Naive thymus-derived CD4-positive, alpha-beta T cell (primary cell): ENCODE measurements at regions of chr2 and their contacts with region 1.

Region 1: GRCh38 chr2:28392297-28393113 is at the start of gene FOSL2:
- DNase-seq: peak; percentile 87 to 98 (median 92)
- ATAC-seq: peak; percentile 85
- H3K4me3 ChIP-seq: peak within 1 kb of the TSS; percentile 92
- H3K4me3 Mint-ChIP-seq: peak within 1 kb of the TSS in 7 of 10 donors; percentile 86 to 99 (median 91)
- H3K27ac ChIP-seq: peak within 1 kb of the TSS; percentile 88
- H3K27ac Mint-ChIP-seq: peak within 1 kb of the TSS in 8 of 9 donors; percentile 92 to 98 (median 98)
- H3K4me1 ChIP-seq: peaks cover 16 to 18% of the 10 kb centered on the region in 2 donors
- H3K4me1 Mint-ChIP-seq: peaks cover 6 to 45% (median 21%) of the 10 kb centered on the region in 7 donors
- H3K27me3 ChIP-seq: no peaks in the 10 kb centered on the region
- H3K27me3 Mint-ChIP-seq: no peaks in the 10 kb centered on the region
- total RNA-seq, gene FOSL2: 0.81 to 251 (median 33.9) TPM

Region 2: GRCh38 chr2:27050281-27050995 is 1342.1 kb before region 1 on chr2:
- CTCF ChIA-PET with region 1: no interaction called
- POLR2A ChIA-PET with region 1: no interaction called
- intact Hi-C with region 1: loop called in 1 of 2 experiments (anchors 2 kb)
- DNase-seq: peak; percentile 77 to 95 (median 94)
- ATAC-seq: peak; percentile 76
- H3K4me3 ChIP-seq: peak overlapping the region; percentile 99
- H3K4me3 Mint-ChIP-seq: peak overlapping the region; percentile 86 to 100 (median 99)
- H3K27ac ChIP-seq: peak overlapping the region; percentile 84
- H3K27ac Mint-ChIP-seq: peak overlapping the region; percentile 96 to 100 (median 100)
- H3K4me1 ChIP-seq: peaks cover 8 to 15% of the 10 kb centered on the region in 2 donors
- H3K4me1 Mint-ChIP-seq: peaks cover 10 to 34% (median 19%) of the 10 kb centered on the region in 7 donors
- H3K27me3 ChIP-seq: no peaks in the 10 kb centered on the region
- H3K27me3 Mint-ChIP-seq: peaks cover 0 to 8% (median 4%) of the 10 kb centered on the region in 5 donors

Region 3: DNA sequence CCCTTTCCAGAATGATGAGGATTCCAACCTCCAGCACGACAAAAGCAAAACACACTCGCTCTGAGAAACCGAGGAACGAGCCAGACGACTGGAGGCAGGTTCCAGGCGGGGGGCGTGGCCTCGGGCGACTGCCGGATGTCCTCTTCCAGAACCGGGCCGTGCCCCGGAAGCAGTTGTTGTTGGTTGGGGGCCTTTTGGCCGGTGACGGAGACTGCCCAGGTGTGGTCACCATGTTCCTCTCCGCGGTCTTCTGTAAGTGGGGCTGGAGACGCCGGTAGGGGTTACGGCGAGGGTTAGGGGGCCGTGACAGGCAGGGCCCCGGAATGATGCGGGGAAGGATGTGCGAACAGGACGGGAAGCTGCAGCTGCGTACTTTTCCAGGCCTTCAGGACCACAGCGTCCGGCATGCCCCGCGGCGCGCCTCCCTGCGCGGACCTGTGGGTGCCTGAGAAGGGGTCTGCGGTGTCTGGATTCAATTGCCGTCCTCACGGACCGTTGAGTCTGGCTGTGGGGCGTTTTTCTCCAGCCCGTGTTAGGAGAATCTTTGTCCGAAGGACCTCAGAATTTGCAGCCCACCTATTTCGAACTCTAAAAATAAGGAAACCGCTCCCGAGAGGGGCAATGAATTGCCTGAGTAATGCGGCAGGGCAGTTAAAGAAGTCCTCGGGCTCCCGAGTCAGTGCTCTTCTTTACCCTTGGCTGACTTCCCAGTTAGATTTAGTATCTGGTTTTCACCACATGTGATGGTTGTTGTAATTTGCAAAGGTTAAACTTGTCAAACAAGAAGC is 620.8 kb before region 1 on chr2 and contains the start of gene MRPL33:
- CTCF ChIA-PET with region 1: no interaction called
- POLR2A ChIA-PET with region 1: no interaction called
- intact Hi-C with region 1: loop called (anchors 1 to 5 kb)
- DNase-seq: peak; percentile 85 to 92 (median 89)
- ATAC-seq: peak; percentile 97
- H3K4me3 ChIP-seq: peak within 1 kb of the TSS; percentile 92
- H3K4me3 Mint-ChIP-seq: peak within 1 kb of the TSS; percentile 96 to 100 (median 99)
- H3K27ac ChIP-seq: peak within 1 kb of the TSS; percentile 92
- H3K27ac Mint-ChIP-seq: peak within 1 kb of the TSS; percentile 97 to 100 (median 100)
- H3K4me1 ChIP-seq: peaks cover 10 to 20% of the 10 kb centered on the region in 2 donors
- H3K4me1 Mint-ChIP-seq: peaks cover 32 to 59% (median 52%) of the 10 kb centered on the region in 7 donors
- H3K27me3 ChIP-seq: no peaks in the 10 kb centered on the region
- H3K27me3 Mint-ChIP-seq: peaks cover 0 to 8% (median 0%) of the 10 kb centered on the region in 5 donors
- total RNA-seq, gene MRPL33: 27.3 to 39.4 (median 35.1) TPM

Region 4: DNA sequence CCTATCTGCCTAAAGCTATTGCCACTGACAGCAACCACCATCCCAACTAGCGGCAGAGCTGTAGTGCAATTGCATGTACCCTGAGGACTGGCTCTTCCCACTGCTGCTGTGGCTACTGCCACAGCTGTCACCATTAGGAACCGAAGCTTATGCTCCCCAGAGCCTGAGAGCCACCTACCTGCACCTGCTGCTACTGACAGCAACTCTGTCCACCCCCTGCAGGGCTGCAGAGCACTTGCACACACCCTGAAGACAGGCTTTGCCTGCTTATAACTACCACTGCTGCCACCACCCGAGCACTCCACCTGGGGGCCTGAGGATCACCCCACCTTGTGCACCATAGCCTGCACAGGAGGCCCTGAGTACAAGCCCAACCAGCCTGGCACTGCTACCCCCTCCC is 217.5 kb before region 1 on chr2:
- CTCF ChIA-PET with region 1: no interaction called
- POLR2A ChIA-PET with region 1: no interaction called
- intact Hi-C with region 1: no loop called
- DNase-seq: no peak
- ATAC-seq: no peak
- H3K4me3 ChIP-seq: no peak overlapping the region
- H3K4me3 Mint-ChIP-seq: no peak overlapping the region
- H3K27ac ChIP-seq: no peak overlapping the region
- H3K27ac Mint-ChIP-seq: no peak overlapping the region
- H3K4me1 ChIP-seq: no peaks in the 10 kb centered on the region
- H3K4me1 Mint-ChIP-seq: peaks cover 0 to 15% (median 0%) of the 10 kb centered on the region in 7 donors
- H3K27me3 ChIP-seq: no peaks in the 10 kb centered on the region
- H3K27me3 Mint-ChIP-seq: no peaks in the 10 kb centered on the region

Region 5: GRCh38 chr2:28359222-28360065 is 33.1 kb before region 1 on chr2:
- CTCF ChIA-PET with region 1: no interaction called
- POLR2A ChIA-PET with region 1: interaction called, 3 read pairs
- intact Hi-C with region 1: loop called (anchors 1 kb)
- DNase-seq: peak; percentile 58 to 87 (median 82)
- ATAC-seq: peak; percentile 86
- H3K4me3 ChIP-seq: peak overlapping the region; percentile 42
- H3K4me3 Mint-ChIP-seq: peak overlapping the region; percentile 76 to 95 (median 84)
- H3K27ac ChIP-seq: peak overlapping the region; percentile 5
- H3K27ac Mint-ChIP-seq: peak overlapping the region; percentile 34 to 96 (median 93)
- H3K4me1 ChIP-seq: peaks cover 36 to 43% of the 10 kb centered on the region in 2 donors
- H3K4me1 Mint-ChIP-seq: peaks cover 34 to 68% (median 38%) of the 10 kb centered on the region in 7 donors
- H3K27me3 ChIP-seq: no peaks in the 10 kb centered on the region
- H3K27me3 Mint-ChIP-seq: peaks cover 0 to 14% (median 0%) of the 10 kb centered on the region in 5 donors

Region 6: DNA sequence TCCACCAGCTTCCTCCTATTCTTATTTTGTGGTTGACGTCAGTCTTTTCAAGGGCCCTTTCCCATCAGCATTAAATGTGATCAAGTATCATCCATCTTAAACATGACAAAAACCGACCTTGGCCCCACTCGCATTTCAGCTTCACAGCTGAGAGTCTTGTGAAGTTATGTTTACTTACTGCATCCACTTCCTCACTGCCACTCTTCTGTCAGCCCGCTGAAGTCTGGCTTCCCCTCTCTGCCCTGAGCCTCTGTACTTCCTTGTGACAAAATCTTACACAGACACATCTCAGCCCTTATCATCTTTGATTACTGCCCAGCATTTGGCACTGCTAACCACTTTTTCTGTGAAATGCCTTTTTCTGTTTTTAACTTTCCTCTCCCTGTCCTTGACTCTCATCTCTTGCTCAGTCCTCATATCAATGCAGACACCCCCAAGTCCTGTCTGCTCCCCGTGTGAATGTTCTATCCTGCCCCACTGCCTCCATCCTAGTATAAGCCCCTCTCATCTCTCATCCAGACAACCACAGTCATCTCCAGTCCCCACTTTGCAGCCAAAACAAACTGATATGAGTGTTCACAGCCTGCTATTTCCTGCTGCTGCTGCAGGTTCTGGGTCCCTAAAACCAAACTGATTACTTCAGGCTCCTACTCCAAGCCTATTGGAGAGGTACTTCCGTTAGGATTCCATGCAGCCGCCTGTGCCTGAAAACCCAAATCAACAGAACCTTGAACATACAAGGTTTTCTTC is 31.5 kb after region 1 on chr2:
- CTCF ChIA-PET with region 1: interaction called, 4 read pairs
- POLR2A ChIA-PET with region 1: interaction called, 6 read pairs
- intact Hi-C with region 1: loop called in 1 of 2 experiments (anchors 1 kb)
- DNase-seq: peak in 7 of 9 donors; percentile 33 to 70 (median 57)
- ATAC-seq: peak; percentile 90
- H3K4me3 ChIP-seq: peak overlapping the region; percentile 21
- H3K4me3 Mint-ChIP-seq: peak overlapping the region; percentile 62 to 84 (median 74)
- H3K27ac ChIP-seq: peak overlapping the region; percentile 66
- H3K27ac Mint-ChIP-seq: peak overlapping the region; percentile 88 to 99 (median 97)
- H3K4me1 ChIP-seq: peaks cover 24 to 30% of the 10 kb centered on the region in 2 donors
- H3K4me1 Mint-ChIP-seq: peaks cover 33 to 53% (median 45%) of the 10 kb centered on the region in 7 donors
- H3K27me3 ChIP-seq: no peaks in the 10 kb centered on the region
- H3K27me3 Mint-ChIP-seq: no peaks in the 10 kb centered on the region

Region 7: GRCh38 chr2:28621172-28622100 is 228.9 kb after region 1 on chr2:
- CTCF ChIA-PET with region 1: no interaction called
- POLR2A ChIA-PET with region 1: no interaction called
- intact Hi-C with region 1: loop called in 1 of 2 experiments (anchors 10 kb)
- DNase-seq: peak; percentile 44 to 96 (median 93)
- ATAC-seq: peak; percentile 94
- H3K4me3 ChIP-seq: peak overlapping the region; percentile 40
- H3K4me3 Mint-ChIP-seq: peak overlapping the region in 9 of 10 donors; percentile 71 to 86 (median 80)
- H3K27ac ChIP-seq: peak overlapping the region; percentile 95
- H3K27ac Mint-ChIP-seq: peak overlapping the region in 5 of 9 donors; percentile 93 to 100 (median 100)
- H3K4me1 ChIP-seq: peaks cover 43 to 86% of the 10 kb centered on the region in 2 donors
- H3K4me1 Mint-ChIP-seq: peaks cover 0 to 96% (median 59%) of the 10 kb centered on the region in 7 donors
- H3K27me3 ChIP-seq: no peaks in the 10 kb centered on the region
- H3K27me3 Mint-ChIP-seq: no peaks in the 10 kb centered on the region

Region 8: GRCh38 chr2:28870146-28870891 is 477.8 kb after region 1 on chr2 and contains the start of gene TRMT61B:
- CTCF ChIA-PET with region 1: no interaction called
- POLR2A ChIA-PET with region 1: no interaction called
- intact Hi-C with region 1: loop called in 1 of 2 experiments (anchors 10 kb)
- DNase-seq: peak; percentile 94 to 97 (median 95)
- ATAC-seq: peak; percentile 98
- H3K4me3 ChIP-seq: peak within 1 kb of the TSS; percentile 96
- H3K4me3 Mint-ChIP-seq: peak within 1 kb of the TSS; percentile 90 to 98 (median 96)
- H3K27ac ChIP-seq: peak within 1 kb of the TSS; percentile 87
- H3K27ac Mint-ChIP-seq: peak within 1 kb of the TSS; percentile 95 to 100 (median 98)
- H3K4me1 ChIP-seq: peaks cover 19 to 22% of the 10 kb centered on the region in 2 donors
- H3K4me1 Mint-ChIP-seq: peaks cover 22 to 48% (median 37%) of the 10 kb centered on the region in 7 donors
- H3K27me3 ChIP-seq: no peaks in the 10 kb centered on the region
- H3K27me3 Mint-ChIP-seq: peaks cover 0 to 6% (median 2%) of the 10 kb centered on the region in 5 donors
- total RNA-seq, gene TRMT61B: 14.8 to 24.5 (median 20.5) TPM